ENCODE measurements at regions of chr1 and their contacts with region 1.

Region 1: GRCh38 chr1:230772457-230773395 is 25.5 kb downstream of the CAPN9 start:
- DNase-seq: no peak
- H3K4me3 ChIP-seq: no peak overlapping the region
- H3K27ac ChIP-seq: peak overlapping the region; percentile 39
- H3K27me3 ChIP-seq: peaks cover 6% of the 10 kb centered on the region
- CTCF ChIP-seq: peak; percentile 85

Region 2: DNA sequence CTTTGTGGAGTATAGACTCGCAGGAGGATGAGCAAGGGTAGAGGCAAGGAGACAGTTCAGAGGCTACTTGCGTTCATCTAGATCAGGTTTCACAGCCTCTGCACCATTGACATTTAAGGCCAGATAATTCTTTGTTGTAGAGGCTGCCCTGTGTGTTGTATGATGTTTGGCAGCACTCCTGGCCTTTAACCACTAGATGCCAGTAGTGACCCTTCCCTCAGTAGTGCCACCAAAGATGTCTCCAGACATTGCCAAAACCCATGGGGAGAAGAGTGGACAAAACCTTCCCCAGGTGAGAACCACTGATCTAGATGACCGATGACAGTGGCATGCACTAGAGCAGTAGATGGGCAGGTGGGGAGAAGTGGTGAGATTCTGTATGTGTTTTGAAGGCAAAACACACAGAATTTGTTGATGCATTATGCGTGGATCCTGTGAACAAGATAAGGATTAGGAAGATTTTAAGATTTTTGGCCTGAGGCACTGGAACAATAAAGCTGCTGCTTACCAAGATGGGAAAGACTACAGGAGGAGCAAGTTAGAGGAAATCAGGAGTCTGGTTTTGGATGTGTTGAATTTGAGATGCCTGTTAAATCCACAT is 140.4 kb before region 1 on chr1:
- CTCF ChIA-PET with region 1: interaction called, 11 read pairs
- POLR2A ChIA-PET with region 1: no interaction called
- DNase-seq: no peak
- H3K4me3 ChIP-seq: no peak overlapping the region
- H3K27ac ChIP-seq: no peak overlapping the region
- H3K27me3 ChIP-seq: peaks cover 3% of the 10 kb centered on the region
- CTCF ChIP-seq: peak; percentile 55

Region 3: GRCh38 chr1:230642263-230642959 is 130.3 kb before region 1 on chr1 and contains the start of gene COG2:
- CTCF ChIA-PET with region 1: interaction called, 75 read pairs
- POLR2A ChIA-PET with region 1: interaction called, 4 read pairs
- DNase-seq: peak; percentile 85
- H3K4me3 ChIP-seq: peak within 1 kb of the TSS; percentile 96
- H3K27ac ChIP-seq: peak within 1 kb of the TSS; percentile 73
- H3K27me3 ChIP-seq: peaks cover 10% of the 10 kb centered on the region
- CTCF ChIP-seq: peak; percentile 94
- polyA plus RNA-seq, gene COG2: 16.7 and 21.5 TPM in 2 replicates

Region 4: DNA sequence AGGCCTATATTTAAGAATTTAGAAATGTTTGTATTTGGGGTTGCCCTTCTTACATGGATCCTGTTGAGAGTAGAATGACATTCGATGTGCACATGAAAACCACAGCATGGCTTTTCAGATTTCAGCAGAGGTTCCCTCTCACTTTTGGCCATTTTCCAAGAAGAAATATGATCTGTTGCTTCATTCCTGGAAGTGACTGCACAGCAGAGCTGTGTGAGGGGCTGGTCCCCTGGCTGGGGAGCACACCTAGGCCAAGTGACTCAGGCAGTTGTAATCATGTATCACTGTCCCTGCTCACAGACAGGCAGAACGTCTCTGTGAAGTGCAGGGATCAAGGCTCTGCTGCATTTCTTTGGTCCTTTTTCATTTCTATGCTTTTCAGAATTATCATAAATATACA is 91.1 kb before region 1 on chr1:
- CTCF ChIA-PET with region 1: interaction called, 11 read pairs
- POLR2A ChIA-PET with region 1: no interaction called
- DNase-seq: peak; percentile 20
- H3K4me3 ChIP-seq: no peak overlapping the region
- H3K27ac ChIP-seq: no peak overlapping the region
- H3K27me3 ChIP-seq: no peaks in the 10 kb centered on the region
- CTCF ChIP-seq: no peak

Region 5: GRCh38 chr1:230744382-230744781 is 28.3 kb before region 1 on chr1:
- CTCF ChIA-PET with region 1: interaction called, 26 read pairs
- POLR2A ChIA-PET with region 1: interaction called, 5 read pairs
- DNase-seq: peak; percentile 39
- H3K4me3 ChIP-seq: no peak overlapping the region
- H3K27ac ChIP-seq: peak overlapping the region; percentile 11
- H3K27me3 ChIP-seq: peaks cover 4% of the 10 kb centered on the region
- CTCF ChIP-seq: no peak

Region 6: DNA sequence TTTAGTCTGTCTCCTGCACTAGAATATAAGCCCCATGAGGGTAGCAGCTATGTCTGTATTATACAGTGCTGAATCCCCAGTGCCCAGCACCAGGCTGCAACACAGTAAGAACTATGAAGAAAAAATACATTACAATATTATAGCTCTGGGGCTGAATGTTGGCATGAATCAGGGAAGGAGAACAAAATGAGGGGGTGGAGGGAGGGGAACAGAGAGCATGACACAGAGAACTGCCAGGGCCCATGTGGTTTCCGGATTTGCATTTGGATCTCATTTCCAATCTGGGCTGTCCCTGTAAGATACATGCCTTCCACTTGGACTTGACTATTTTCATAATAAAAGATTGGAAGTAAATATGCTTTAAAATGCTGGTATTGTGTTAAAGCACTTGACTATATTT is 59.8 kb after region 1 on chr1:
- CTCF ChIA-PET with region 1: no interaction called
- POLR2A ChIA-PET with region 1: no interaction called
- DNase-seq: no peak
- H3K4me3 ChIP-seq: no peak overlapping the region
- H3K27ac ChIP-seq: no peak overlapping the region
- H3K27me3 ChIP-seq: no peaks in the 10 kb centered on the region
- CTCF ChIP-seq: no peak

Measured in AG04450 (cell line).